Mammary epithelial cell (primary cell): ENCODE measurements at regions of chrX and their contacts with region 1.

Region 1: GRCh38 chrX:47030339-47030738 is 47.9 kb upstream of the RGN start:
- DNase-seq: peak; percentile 40
- H3K4me3 ChIP-seq: no peak overlapping the region
- H3K27ac ChIP-seq: no peak overlapping the region
- H3K4me1 ChIP-seq: no peaks in the 10 kb centered on the region
- H3K27me3 ChIP-seq: peaks cover 2% of the 10 kb centered on the region
- CTCF ChIP-seq: peak; percentile 63 to 68

Region 2: GRCh38 chrX:46554942-46555341 is 475.4 kb before region 1 on chrX:
- CTCF ChIA-PET with region 1: no interaction called
- dilution Hi-C with region 1: no loop called
- in situ Hi-C with region 1: no loop called
- intact Hi-C with region 1: loop called (anchors 2 kb)
- DNase-seq: no peak
- H3K4me3 ChIP-seq: no peak overlapping the region
- H3K27ac ChIP-seq: no peak overlapping the region
- H3K4me1 ChIP-seq: no peaks in the 10 kb centered on the region
- H3K27me3 ChIP-seq: no peaks in the 10 kb centered on the region
- CTCF ChIP-seq: peak; percentile 23 to 46

Region 3: DNA sequence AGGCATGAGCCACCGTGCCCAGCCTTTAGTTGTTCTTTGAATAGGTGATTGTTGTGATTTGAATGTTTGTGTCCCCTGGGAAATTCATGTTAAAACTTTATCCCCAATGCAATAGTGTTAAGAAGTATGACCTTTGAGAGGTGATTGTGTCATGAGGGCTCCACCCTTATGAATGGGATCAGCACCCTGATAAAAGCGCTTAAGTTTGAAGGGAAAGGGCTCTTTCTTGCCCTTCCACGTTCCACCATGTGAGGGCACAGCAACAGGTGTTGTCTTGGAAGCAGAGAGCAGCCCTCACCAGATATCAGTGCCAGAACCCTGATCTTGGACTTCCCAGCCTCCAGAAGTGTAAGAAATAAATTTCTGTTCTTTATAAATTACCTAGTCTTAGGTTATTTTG is 227.2 kb before region 1 on chrX:
- CTCF ChIA-PET with region 1: interaction called, 3 read pairs
- dilution Hi-C with region 1: no loop called
- in situ Hi-C with region 1: no loop called
- intact Hi-C with region 1: loop called (anchors 1 kb)
- DNase-seq: no peak
- H3K4me3 ChIP-seq: no peak overlapping the region
- H3K27ac ChIP-seq: no peak overlapping the region
- H3K4me1 ChIP-seq: no peaks in the 10 kb centered on the region
- H3K27me3 ChIP-seq: no peaks in the 10 kb centered on the region
- CTCF ChIP-seq: peak; percentile 13 to 44

Region 4: DNA sequence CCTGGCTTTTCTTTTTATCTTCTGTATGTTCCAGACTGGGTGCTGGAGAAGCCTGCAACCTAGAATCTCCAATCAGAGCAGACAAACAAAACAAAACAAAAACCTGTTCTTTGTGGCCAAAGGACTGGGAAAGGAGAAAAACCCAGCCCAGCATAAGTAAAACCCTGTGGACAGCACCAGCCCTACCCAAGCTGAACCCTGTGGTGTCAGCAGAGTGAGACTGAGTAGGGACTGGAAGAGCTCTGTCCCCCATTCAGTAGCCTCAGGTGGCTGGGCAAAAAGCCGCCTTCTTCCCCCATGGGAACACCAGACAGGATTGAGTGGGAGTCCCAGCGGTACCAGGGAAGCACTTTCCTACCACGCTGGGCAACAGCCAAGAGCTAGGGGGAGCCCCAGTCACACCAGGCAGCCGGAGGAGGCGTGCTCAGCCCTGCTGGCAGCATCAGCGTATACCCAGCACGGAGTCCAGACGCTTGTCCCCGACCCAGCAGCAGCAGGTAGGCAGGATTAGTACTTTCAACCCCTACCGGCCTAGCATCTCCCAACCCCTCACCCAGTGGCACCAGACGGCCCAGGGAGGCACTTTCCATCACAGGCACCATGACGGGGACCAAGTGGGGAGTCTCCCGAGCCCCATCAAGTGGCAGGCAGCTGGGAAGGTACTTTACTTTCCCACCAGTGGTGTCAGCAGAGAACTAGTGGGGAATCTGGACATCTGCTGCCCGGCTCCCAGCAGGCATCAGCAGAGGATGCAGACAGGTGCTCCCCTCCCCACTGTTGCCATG is 126.7 kb before region 1 on chrX:
- CTCF ChIA-PET with region 1: no interaction called
- dilution Hi-C with region 1: no loop called
- in situ Hi-C with region 1: no loop called
- intact Hi-C with region 1: loop called (anchors 1 kb)
- DNase-seq: peak; percentile 65
- H3K4me3 ChIP-seq: peak overlapping the region in 2 of 3 experiments; percentile 50 to 56
- H3K27ac ChIP-seq: no peak overlapping the region
- H3K4me1 ChIP-seq: no peaks in the 10 kb centered on the region
- H3K27me3 ChIP-seq: no peaks in the 10 kb centered on the region
- CTCF ChIP-seq: peak; percentile 22 to 76

Region 5: DNA sequence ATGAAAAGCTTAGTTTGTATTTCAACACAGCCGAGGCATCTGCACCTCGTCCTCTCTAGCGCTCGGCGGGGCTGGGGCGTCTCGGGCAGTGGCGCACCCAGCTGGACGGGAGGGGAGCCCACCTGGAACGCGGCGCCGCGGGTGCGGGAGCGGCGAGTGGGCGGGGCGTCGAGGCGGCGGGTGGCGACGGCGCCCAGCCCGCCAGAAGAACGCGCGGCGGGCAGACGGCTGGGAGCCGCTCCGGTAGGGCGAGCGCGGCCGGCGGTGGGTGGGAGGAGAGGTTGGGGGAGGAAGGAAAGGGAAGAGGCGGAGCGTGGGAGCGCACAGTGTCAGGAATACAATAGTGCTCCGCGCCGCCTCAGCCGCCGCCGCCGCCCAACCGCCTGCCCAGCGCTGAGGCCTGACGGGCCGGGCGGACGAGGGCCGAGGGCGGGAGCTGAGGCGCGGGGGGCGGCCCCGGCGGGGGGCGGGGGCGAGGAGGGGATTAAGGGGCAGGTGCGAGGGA is 118.2 kb before region 1 on chrX and contains the start of gene JADE3:
- CTCF ChIA-PET with region 1: no interaction called
- dilution Hi-C with region 1: no loop called
- in situ Hi-C with region 1: no loop called
- intact Hi-C with region 1: loop called (anchors 1 kb)
- DNase-seq: peak; percentile 67
- H3K4me3 ChIP-seq: peak within 1 kb of the TSS; percentile 47 to 68 (median 56)
- H3K27ac ChIP-seq: peak within 1 kb of the TSS; percentile 5
- H3K4me1 ChIP-seq: no peaks in the 10 kb centered on the region
- H3K27me3 ChIP-seq: no peaks in the 10 kb centered on the region
- CTCF ChIP-seq: no peak
- total RNA-seq, gene JADE3: 7.5 to 12.5 TPM

Region 6: DNA sequence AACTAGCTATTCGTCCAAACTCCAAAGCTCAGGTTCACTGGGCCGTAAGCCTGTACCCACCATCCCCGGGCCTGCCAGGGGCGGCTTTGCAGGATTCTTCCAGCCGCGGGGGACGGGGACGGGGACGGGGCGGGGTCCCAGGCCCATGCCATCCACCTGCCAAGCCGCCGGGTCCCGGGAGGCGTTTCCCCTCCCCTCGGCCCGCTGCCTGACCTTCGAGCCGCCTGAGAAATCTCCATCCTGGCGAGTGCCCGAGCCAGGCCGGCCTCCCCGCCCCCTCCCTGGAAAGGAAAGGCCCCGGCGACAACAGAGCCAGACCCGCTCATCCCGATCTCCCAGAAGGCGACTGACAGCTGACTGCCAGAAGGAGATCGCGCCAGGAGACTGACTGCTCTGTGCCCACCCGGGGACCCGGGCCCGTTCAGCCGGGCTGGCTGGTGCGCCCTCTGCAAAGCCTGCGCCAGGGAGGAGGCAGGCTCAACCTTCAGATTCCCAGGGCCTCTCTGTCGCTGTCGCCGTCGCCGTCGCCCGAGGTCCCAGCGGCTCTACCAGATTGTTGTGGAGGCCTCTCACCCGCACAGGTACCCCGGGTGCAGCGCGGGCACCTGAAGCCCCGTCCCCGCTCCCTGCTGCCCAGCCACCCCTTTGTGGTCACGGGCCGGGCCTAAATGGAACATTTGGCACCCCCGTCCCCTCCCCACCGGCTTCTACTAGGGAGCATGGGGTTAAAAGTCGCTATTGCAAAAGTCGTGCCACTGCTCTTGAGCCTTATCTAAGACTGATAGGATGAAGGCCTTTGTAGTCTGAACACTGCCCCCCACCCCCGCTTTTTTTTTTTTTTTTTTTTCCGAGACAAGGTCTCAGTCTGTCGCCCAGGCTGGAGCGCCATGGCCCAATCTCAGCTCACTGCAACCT is 48.0 kb after region 1 on chrX and contains the start of gene RGN:
- CTCF ChIA-PET with region 1: no interaction called
- dilution Hi-C with region 1: loop called (anchors 5 kb)
- in situ Hi-C with region 1: no loop called
- intact Hi-C with region 1: no loop called
- DNase-seq: no peak
- H3K4me3 ChIP-seq: no peak within 1 kb of the TSS
- H3K27ac ChIP-seq: no peak within 1 kb of the TSS
- H3K4me1 ChIP-seq: peaks cover 4% of the 10 kb centered on the region
- H3K27me3 ChIP-seq: peaks cover 5% of the 10 kb centered on the region
- CTCF ChIP-seq: no peak
- total RNA-seq, gene RGN: 3.8 TPM in 1 of 2 donors, not detected in the other